ENCODE measurements at regions of chr5 and their contacts with region 1.

Region 1: GRCh38 chr5:141512390-141512910 is 23.6 kb downstream of the PCDHGC5 start:
- DNase-seq: peak; percentile 73 to 80 (median 76)
- H3K4me3 ChIP-seq: peak overlapping the region in 1 of 2 donors; percentile 70
- H3K4me3 Mint-ChIP-seq: peak overlapping the region; percentile 76 to 95 (median 90)
- H3K27ac ChIP-seq: no peak overlapping the region
- H3K27ac Mint-ChIP-seq: peak overlapping the region; percentile 6 to 89 (median 67)
- H3K4me1 ChIP-seq: peaks cover 20% of the 10 kb centered on the region
- H3K4me1 Mint-ChIP-seq: peaks cover 14 to 28% (median 22%) of the 10 kb centered on the region in 4 donors
- H3K27me3 ChIP-seq: no peaks in the 10 kb centered on the region
- H3K27me3 Mint-ChIP-seq: peaks cover 0 to 3% of the 10 kb centered on the region in 2 donors

Region 2: GRCh38 chr5:141223112-141223783 is 289.2 kb before region 1 on chr5 and contains the start of gene PCDHB14:
- CTCF ChIA-PET with region 1: interaction called, 10 read pairs
- POLR2A ChIA-PET with region 1: no interaction called
- intact Hi-C with region 1: no loop called
- DNase-seq: peak in 1 of 5 donors; percentile 12
- H3K4me3 ChIP-seq: no peak within 1 kb of the TSS
- H3K4me3 Mint-ChIP-seq: peak within 1 kb of the TSS; percentile 8 to 68 (median 42)
- H3K27ac ChIP-seq: no peak within 1 kb of the TSS
- H3K27ac Mint-ChIP-seq: peak within 1 kb of the TSS in 1 of 7 donors; percentile 5
- H3K4me1 ChIP-seq: no peaks in the 10 kb centered on the region
- H3K4me1 Mint-ChIP-seq: peaks cover 0 to 6% (median 2%) of the 10 kb centered on the region in 4 donors
- H3K27me3 ChIP-seq: peaks cover 12% of the 10 kb centered on the region
- H3K27me3 Mint-ChIP-seq: peaks cover 30 to 47% of the 10 kb centered on the region in 2 donors
- total RNA-seq, gene PCDHB14: 0.14 to 0.15 TPM

Region 3: GRCh38 chr5:141326088-141326854 is 186.2 kb before region 1 on chr5:
- CTCF ChIA-PET with region 1: interaction called, 20 read pairs
- POLR2A ChIA-PET with region 1: interaction called, 10 read pairs
- intact Hi-C with region 1: loop called (anchors 1 kb)
- DNase-seq: peak; percentile 67 to 80 (median 71)
- H3K4me3 ChIP-seq: peak overlapping the region; percentile 26 to 50
- H3K4me3 Mint-ChIP-seq: peak overlapping the region; percentile 91 to 97 (median 94)
- H3K27ac ChIP-seq: peak overlapping the region; percentile 37
- H3K27ac Mint-ChIP-seq: peak overlapping the region; percentile 36 to 98 (median 94)
- H3K4me1 ChIP-seq: peaks cover 2% of the 10 kb centered on the region
- H3K4me1 Mint-ChIP-seq: peaks cover 5 to 11% (median 8%) of the 10 kb centered on the region in 4 donors
- H3K27me3 ChIP-seq: no peaks in the 10 kb centered on the region
- H3K27me3 Mint-ChIP-seq: peaks cover 23 to 28% of the 10 kb centered on the region in 2 donors

Region 4: GRCh38 chr5:141412854-141413539 is 99.5 kb before region 1 on chr5 and contains the start of gene PCDHGA10:
- CTCF ChIA-PET with region 1: interaction called, 37 read pairs
- POLR2A ChIA-PET with region 1: interaction called, 3 read pairs
- intact Hi-C with region 1: loop called (anchors 1 kb)
- DNase-seq: peak; percentile 53 to 61 (median 59)
- H3K4me3 ChIP-seq: peak within 1 kb of the TSS; percentile 14 to 51
- H3K4me3 Mint-ChIP-seq: peak within 1 kb of the TSS; percentile 81 to 92 (median 89)
- H3K27ac ChIP-seq: no peak within 1 kb of the TSS
- H3K27ac Mint-ChIP-seq: peak within 1 kb of the TSS in 5 of 7 donors; percentile 30 to 87 (median 69)
- H3K4me1 ChIP-seq: peaks cover 8% of the 10 kb centered on the region
- H3K4me1 Mint-ChIP-seq: peaks cover 11 to 20% (median 15%) of the 10 kb centered on the region in 4 donors
- H3K27me3 ChIP-seq: peaks cover 22% of the 10 kb centered on the region
- H3K27me3 Mint-ChIP-seq: peaks cover 36 to 56% of the 10 kb centered on the region in 2 donors
- total RNA-seq, gene PCDHGA10: 0.25 to 0.35 TPM

Region 5: DNA sequence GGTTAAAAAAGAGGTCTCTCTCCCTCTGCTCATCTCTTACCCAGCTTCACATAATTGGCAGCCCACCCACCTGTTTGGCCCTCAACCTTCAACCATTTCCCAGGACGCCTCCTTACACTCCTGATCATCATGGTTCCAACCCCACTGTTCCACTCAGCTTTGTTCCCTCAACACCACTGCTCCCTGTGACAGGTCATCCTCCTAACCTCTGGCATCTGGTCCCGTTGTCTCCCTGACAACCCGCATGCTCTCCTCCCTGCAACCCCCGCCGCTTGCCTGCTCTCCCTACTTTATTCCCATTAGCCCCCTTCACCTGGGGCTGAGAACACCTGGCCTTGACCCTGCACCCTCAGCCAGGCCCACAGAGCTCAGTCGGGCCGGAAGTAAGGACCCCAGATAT is 10.7 kb before region 1 on chr5:
- CTCF ChIA-PET with region 1: interaction called, 37 read pairs
- POLR2A ChIA-PET with region 1: no interaction called
- intact Hi-C with region 1: no loop called
- DNase-seq: no peak
- H3K4me3 ChIP-seq: no peak overlapping the region
- H3K4me3 Mint-ChIP-seq: no peak overlapping the region
- H3K27ac ChIP-seq: no peak overlapping the region
- H3K27ac Mint-ChIP-seq: no peak overlapping the region
- H3K4me1 ChIP-seq: no peaks in the 10 kb centered on the region
- H3K4me1 Mint-ChIP-seq: no peaks in the 10 kb centered on the region
- H3K27me3 ChIP-seq: no peaks in the 10 kb centered on the region
- H3K27me3 Mint-ChIP-seq: peaks cover 8 to 9% of the 10 kb centered on the region in 2 donors

Region 6: DNA sequence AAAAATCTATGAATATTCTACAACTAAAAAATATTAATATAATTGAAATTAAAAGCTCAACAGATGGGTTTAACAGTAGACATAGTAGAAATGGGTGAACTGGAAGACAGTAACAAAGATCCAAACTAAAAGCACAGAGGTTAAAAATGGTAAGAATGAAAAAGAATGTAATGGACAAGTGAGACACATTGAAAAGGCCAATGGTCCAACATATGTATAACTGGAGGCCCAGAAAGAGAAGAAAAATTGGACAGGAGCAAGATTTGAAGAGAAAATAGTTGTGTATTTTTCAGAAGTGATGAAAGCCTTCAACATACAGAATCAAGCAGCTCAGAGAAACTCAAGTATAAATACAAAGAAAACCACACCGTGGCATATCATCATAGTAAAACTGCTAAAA is 35.0 kb after region 1 on chr5:
- CTCF ChIA-PET with region 1: no interaction called
- POLR2A ChIA-PET with region 1: no interaction called
- intact Hi-C with region 1: no loop called
- DNase-seq: no peak
- H3K4me3 ChIP-seq: no peak overlapping the region
- H3K4me3 Mint-ChIP-seq: peak overlapping the region in 1 of 8 donors; percentile 64
- H3K27ac ChIP-seq: no peak overlapping the region
- H3K27ac Mint-ChIP-seq: no peak overlapping the region
- H3K4me1 ChIP-seq: peaks cover 17% of the 10 kb centered on the region
- H3K4me1 Mint-ChIP-seq: peaks cover 27 to 51% (median 38%) of the 10 kb centered on the region in 4 donors
- H3K27me3 ChIP-seq: no peaks in the 10 kb centered on the region
- H3K27me3 Mint-ChIP-seq: no peaks in the 10 kb centered on the region

Region 7: DNA sequence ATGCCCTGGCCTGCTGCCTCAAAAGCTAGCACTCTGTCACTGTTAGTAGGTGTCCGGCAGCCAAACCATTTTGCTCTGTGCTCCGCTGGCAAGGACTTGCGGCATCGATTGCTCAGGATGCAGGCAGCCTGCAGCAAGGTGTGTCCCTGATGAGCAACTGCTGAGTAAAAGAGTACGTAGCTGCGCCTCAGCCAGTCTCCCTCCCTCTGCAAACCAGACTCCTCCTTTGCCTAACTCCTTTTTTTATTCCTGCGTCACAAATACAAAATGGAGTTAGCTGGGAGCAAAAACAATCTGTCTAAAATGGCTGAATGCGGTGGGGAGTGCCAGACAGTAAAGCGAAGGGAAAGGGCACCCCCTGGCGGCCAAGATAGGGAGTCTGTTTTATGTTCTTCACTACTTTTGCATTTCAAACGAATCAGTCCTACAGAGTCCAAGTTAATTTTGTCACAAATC is 45.3 kb after region 1 on chr5:
- CTCF ChIA-PET with region 1: interaction called, 31 read pairs
- POLR2A ChIA-PET with region 1: interaction called, 5 read pairs
- intact Hi-C with region 1: no loop called
- DNase-seq: peak; percentile 77 to 82 (median 79)
- H3K4me3 ChIP-seq: no peak overlapping the region
- H3K4me3 Mint-ChIP-seq: peak overlapping the region in 4 of 8 donors; percentile 12 to 63 (median 21)
- H3K27ac ChIP-seq: peak overlapping the region; percentile 44
- H3K27ac Mint-ChIP-seq: peak overlapping the region; percentile 76 to 94 (median 93)
- H3K4me1 ChIP-seq: peaks cover 21% of the 10 kb centered on the region
- H3K4me1 Mint-ChIP-seq: peaks cover 26 to 36% (median 34%) of the 10 kb centered on the region in 4 donors
- H3K27me3 ChIP-seq: no peaks in the 10 kb centered on the region
- H3K27me3 Mint-ChIP-seq: no peaks in the 10 kb centered on the region

Measured in CD4-positive, alpha-beta memory T cell (primary cell).